Right ventricle myocardium inferior (tissue), 1 donor: ENCODE measurements at regions of chr5 and their contacts with region 1.

Region 1: GRCh38 chr5:67693956-67694809 is 497.6 kb upstream of the CD180 start:
- DNase-seq: peak; percentile 71
- ATAC-seq: peak; percentile 96

Region 2: GRCh38 chr5:67338421-67338820 is 355.8 kb before region 1 on chr5:
- intact Hi-C with region 1: no loop called
- DNase-seq: no peak
- ATAC-seq: no peak

Region 3: GRCh38 chr5:67659288-67659687 is 34.9 kb before region 1 on chr5:
- intact Hi-C with region 1: loop called (anchors 5 kb)
- DNase-seq: no peak
- ATAC-seq: peak; percentile 96

Region 4: GRCh38 chr5:67809589-67809988 is 115.4 kb after region 1 on chr5:
- intact Hi-C with region 1: loop called (anchors 1 kb)
- DNase-seq: no peak
- ATAC-seq: no peak

Region 5: GRCh38 chr5:68215208-68215897 is 521.2 kb after region 1 on chr5 and contains the start of gene PIK3R1:
- intact Hi-C with region 1: loop called (anchors 5 kb)
- DNase-seq: peak; percentile 99
- ATAC-seq: peak; percentile 97
- total RNA-seq, gene PIK3R1: 113 TPM

Region 6: DNA sequence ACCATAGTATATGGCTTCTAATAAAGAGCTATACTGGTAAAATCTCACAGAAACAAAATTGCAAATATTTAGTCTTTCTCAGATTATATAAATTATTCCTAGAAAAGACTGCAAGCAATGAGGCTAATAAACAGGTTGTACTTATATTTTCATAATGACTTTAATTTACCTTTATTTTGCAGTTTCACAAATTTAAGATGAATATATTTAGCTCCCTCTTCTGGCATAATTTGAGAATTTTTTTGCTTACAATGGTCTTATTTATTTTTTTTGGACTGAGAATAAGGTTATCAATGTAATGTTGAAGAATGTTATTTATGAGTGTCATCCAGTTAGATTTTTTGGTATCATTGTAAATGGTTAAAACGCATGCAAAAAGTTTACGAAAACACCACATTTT is 578.1 kb after region 1 on chr5:
- intact Hi-C with region 1: loop called (anchors 5 kb)
- DNase-seq: no peak
- ATAC-seq: no peak